ENCODE measurements at regions of chr2 and their contacts with region 1.

Region 1: GRCh38 chr2:48248241-48248933 is 281.6 kb upstream of the STON1 start:
- DNase-seq: peak; percentile 11 to 32
- ATAC-seq: peak; percentile 86 to 92
- H3K4me3 ChIP-seq: no peak overlapping the region
- H3K27ac ChIP-seq: peak overlapping the region; percentile 53 to 82 (median 66)
- H3K4me1 ChIP-seq: peaks cover 34 to 38% of the 10 kb centered on the region in 2 donors
- H3K27me3 ChIP-seq: no peaks in the 10 kb centered on the region
- CTCF ChIP-seq: no peak
- POLR2A ChIP-seq: no peak

Region 2: GRCh38 chr2:48343571-48344440 is 95.4 kb after region 1 on chr2:
- in situ Hi-C with region 1: no loop called
- intact Hi-C with region 1: loop called (anchors 5 kb)
- DNase-seq: no peak
- ATAC-seq: peak; percentile 25 to 27
- H3K4me3 ChIP-seq: peak overlapping the region; percentile 6 to 44 (median 16)
- H3K27ac ChIP-seq: peak overlapping the region; percentile 49 to 70 (median 62)
- H3K4me1 ChIP-seq: peaks cover 39 to 59% of the 10 kb centered on the region in 2 donors
- H3K27me3 ChIP-seq: no peaks in the 10 kb centered on the region
- CTCF ChIP-seq: no peak
- POLR2A ChIP-seq: no peak

Region 3: GRCh38 chr2:48870503-48870902 is 622.1 kb after region 1 on chr2:
- in situ Hi-C with region 1: no loop called
- intact Hi-C with region 1: no loop called
- DNase-seq: no peak
- ATAC-seq: no peak
- H3K4me3 ChIP-seq: no peak overlapping the region
- H3K27ac ChIP-seq: no peak overlapping the region
- H3K4me1 ChIP-seq: no peaks in the 10 kb centered on the region
- H3K27me3 ChIP-seq: no peaks in the 10 kb centered on the region
- CTCF ChIP-seq: no peak
- POLR2A ChIP-seq: no peak